Body of pancreas (tissue), 4 donors: ENCODE measurements at regions of chr13 and their contacts with region 1.

Region 1: DNA sequence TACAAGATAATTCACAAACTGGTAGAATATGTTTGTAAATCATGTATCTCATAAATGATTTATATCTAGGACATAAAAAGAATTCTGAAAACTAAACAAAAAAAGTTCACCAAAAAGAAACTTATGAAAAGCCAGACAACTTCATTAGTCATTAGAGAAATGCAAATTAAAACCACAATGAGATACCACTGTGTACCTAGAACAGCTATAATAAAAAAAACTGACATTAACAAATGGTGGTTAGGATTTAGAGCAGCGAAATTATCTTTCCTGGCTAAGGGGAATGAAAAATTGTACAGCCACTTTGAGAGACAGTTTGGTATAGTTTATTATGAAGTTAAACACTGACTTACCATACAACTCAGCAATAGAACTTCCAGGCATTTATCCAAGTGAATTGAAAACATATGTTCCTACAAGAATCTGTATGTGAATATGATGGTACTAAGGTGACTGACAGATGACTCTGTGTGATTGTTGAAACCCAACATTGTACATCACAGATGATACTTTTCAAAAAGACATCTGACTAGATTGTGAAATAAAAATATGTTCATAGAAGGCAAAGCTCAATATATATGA is 41.8 kb downstream of the UGGT2 start:
- DNase-seq: no peak
- ATAC-seq: no peak
- H3K4me3 ChIP-seq: no peak overlapping the region
- H3K27ac ChIP-seq: no peak overlapping the region
- H3K4me1 ChIP-seq: no peaks in the 10 kb centered on the region
- H3K27me3 ChIP-seq: no peaks in the 10 kb centered on the region
- CTCF ChIP-seq: no peak
- POLR2A ChIP-seq: no peak

Region 2: DNA sequence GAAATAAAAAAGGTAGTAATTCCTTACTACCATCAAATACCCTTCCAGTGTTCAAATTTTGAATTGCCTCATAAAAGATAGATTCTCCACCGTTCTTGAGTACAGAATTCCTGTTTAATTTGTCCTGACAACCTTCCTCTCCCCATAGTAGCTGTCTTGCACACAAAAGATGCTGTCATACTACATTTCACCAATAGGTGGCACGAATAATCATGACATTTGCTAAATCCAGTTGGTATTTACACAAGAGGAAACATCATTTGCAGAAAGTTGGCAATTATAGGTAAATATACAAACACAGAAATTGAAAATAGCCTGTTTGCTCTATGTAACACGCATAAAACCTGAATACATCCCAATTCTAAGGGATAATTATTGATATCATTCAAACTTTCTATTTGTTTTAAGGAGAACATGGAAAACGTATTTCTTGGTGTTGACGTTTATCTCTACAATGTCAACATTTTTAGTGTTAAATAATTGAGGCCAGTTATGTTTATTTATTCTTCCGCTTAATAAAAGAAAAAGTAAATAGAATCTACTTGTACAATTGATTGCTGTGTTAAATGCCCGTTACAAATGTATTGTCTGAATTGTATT is 517.2 kb before region 1 on chr13:
- intact Hi-C with region 1: no loop called
- DNase-seq: peak in 2 of 4 donors; percentile 24 to 55
- ATAC-seq: peak; percentile 75
- H3K4me3 ChIP-seq: no peak overlapping the region
- H3K27ac ChIP-seq: no peak overlapping the region
- H3K4me1 ChIP-seq: peaks cover 23% of the 10 kb centered on the region
- H3K27me3 ChIP-seq: no peaks in the 10 kb centered on the region
- CTCF ChIP-seq: peak; percentile 30 to 89 (median 88)
- POLR2A ChIP-seq: no peak

Region 3: GRCh38 chr13:95880331-95880730 is 131.1 kb before region 1 on chr13:
- intact Hi-C with region 1: no loop called
- DNase-seq: no peak
- ATAC-seq: no peak
- H3K4me3 ChIP-seq: no peak overlapping the region
- H3K27ac ChIP-seq: no peak overlapping the region
- H3K4me1 ChIP-seq: peaks cover 8% of the 10 kb centered on the region
- H3K27me3 ChIP-seq: no peaks in the 10 kb centered on the region
- CTCF ChIP-seq: no peak
- POLR2A ChIP-seq: no peak

Region 4: GRCh38 chr13:96279904-96280303 is 268.5 kb after region 1 on chr13:
- intact Hi-C with region 1: no loop called
- DNase-seq: peak in 1 of 4 donors; percentile 5
- ATAC-seq: no peak
- H3K4me3 ChIP-seq: no peak overlapping the region
- H3K27ac ChIP-seq: no peak overlapping the region
- H3K4me1 ChIP-seq: no peaks in the 10 kb centered on the region
- H3K27me3 ChIP-seq: no peaks in the 10 kb centered on the region
- CTCF ChIP-seq: no peak
- POLR2A ChIP-seq: no peak

Region 5: GRCh38 chr13:96817336-96817941 is 806.1 kb after region 1 on chr13:
- intact Hi-C with region 1: loop called (anchors 10 kb)
- DNase-seq: no peak
- ATAC-seq: no peak
- H3K4me3 ChIP-seq: no peak overlapping the region
- H3K27ac ChIP-seq: no peak overlapping the region
- H3K4me1 ChIP-seq: peaks cover 8% of the 10 kb centered on the region
- H3K27me3 ChIP-seq: no peaks in the 10 kb centered on the region
- CTCF ChIP-seq: peak; percentile 6 to 60 (median 52)
- POLR2A ChIP-seq: no peak